Mammary epithelial cell (primary cell): ENCODE measurements at regions of chr11 and their contacts with region 1.

Region 1: GRCh38 chr11:58354727-58355126 is 4.1 kb downstream of the OR5B17 start:
- DNase-seq: no peak
- H3K4me3 ChIP-seq: no peak overlapping the region
- H3K27ac ChIP-seq: no peak overlapping the region
- H3K4me1 ChIP-seq: no peaks in the 10 kb centered on the region
- H3K27me3 ChIP-seq: no peaks in the 10 kb centered on the region
- CTCF ChIP-seq: no peak

Region 2: DNA sequence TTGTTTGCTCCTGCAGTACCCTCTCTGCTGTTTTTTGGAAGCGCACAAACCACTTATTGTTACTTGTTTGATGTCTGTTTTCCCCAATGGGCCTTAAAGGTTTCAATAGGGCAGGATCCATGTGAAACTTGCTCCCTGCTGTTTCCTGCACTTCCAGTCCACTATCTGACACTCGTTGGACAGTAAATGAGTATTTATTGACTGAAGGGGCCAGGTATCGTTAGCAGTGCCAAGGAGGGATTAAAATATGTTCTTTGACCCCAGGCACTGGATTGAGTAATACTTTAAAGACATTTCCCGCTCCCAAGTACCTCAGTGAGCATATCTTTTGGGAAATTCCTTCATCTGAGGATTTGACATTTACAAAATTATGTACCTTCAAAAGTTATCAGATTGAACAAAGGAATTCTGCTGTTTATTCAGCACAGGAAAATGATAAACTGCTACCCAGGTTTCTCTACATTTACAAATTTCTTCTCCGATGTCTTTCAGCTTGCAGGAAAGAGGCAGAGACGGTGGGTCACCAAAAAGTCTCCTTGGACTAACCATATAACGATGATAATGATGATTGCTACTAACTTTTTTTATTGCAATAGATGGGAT is 189.1 kb before region 1 on chr11:
- CTCF ChIA-PET with region 1: no interaction called
- dilution Hi-C with region 1: no loop called
- in situ Hi-C with region 1: no loop called
- intact Hi-C with region 1: no loop called
- DNase-seq: no peak
- H3K4me3 ChIP-seq: no peak overlapping the region
- H3K27ac ChIP-seq: no peak overlapping the region
- H3K4me1 ChIP-seq: no peaks in the 10 kb centered on the region
- H3K27me3 ChIP-seq: no peaks in the 10 kb centered on the region
- CTCF ChIP-seq: no peak

Region 3: DNA sequence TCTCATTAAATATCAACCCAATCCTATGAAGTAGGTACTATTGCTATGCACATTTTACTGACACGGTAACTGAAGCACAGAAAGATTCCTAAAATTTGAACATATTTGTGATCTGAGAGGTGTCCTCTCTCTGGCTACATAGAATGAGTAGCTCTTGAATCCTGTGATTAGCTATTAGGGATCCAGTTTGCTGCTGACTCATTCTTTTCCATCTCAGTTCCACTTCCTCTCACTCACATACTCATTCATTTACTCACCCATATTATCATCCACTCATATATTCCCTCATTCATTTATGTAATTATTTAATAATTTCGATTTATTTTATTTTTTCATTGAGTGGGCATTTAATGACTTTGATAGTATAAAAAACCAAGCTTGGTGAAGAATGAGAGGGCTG is 38.6 kb before region 1 on chr11:
- CTCF ChIA-PET with region 1: no interaction called
- dilution Hi-C with region 1: loop called (anchors 5 kb)
- in situ Hi-C with region 1: no loop called
- intact Hi-C with region 1: no loop called
- DNase-seq: peak; percentile 60
- H3K4me3 ChIP-seq: no peak overlapping the region
- H3K27ac ChIP-seq: peak overlapping the region; percentile 7
- H3K4me1 ChIP-seq: peaks cover 6% of the 10 kb centered on the region
- H3K27me3 ChIP-seq: no peaks in the 10 kb centered on the region
- CTCF ChIP-seq: no peak

Region 4: DNA sequence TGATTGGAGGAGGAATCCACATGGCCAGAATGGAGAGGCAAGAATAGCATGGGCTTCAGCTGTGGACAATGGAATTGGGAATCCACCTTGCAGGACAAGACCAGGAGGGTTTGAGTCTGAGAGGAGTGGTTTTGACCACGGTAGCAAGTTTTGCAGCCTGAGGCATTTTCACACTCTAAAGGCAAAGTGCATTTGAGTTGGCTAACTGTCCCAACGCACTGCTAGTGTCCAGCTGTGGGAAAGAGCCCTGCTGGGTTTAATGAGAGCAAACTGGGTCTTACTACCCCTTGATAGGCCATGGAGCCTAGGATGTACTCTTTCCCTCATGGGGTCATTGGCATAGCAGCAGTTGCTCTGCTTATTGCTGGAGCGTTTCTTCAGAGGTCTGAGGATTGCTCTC is 73.3 kb after region 1 on chr11 and contains the start of gene OR5B2:
- CTCF ChIA-PET with region 1: no interaction called
- dilution Hi-C with region 1: no loop called
- in situ Hi-C with region 1: no loop called
- intact Hi-C with region 1: no loop called
- DNase-seq: no peak
- H3K4me3 ChIP-seq: no peak within 1 kb of the TSS
- H3K27ac ChIP-seq: no peak within 1 kb of the TSS
- H3K4me1 ChIP-seq: no peaks in the 10 kb centered on the region
- H3K27me3 ChIP-seq: no peaks in the 10 kb centered on the region
- CTCF ChIP-seq: no peak
- total RNA-seq, gene OR5B2: under 0.01 TPM in 1 of 2 donors, not detected in the other

Region 5: DNA sequence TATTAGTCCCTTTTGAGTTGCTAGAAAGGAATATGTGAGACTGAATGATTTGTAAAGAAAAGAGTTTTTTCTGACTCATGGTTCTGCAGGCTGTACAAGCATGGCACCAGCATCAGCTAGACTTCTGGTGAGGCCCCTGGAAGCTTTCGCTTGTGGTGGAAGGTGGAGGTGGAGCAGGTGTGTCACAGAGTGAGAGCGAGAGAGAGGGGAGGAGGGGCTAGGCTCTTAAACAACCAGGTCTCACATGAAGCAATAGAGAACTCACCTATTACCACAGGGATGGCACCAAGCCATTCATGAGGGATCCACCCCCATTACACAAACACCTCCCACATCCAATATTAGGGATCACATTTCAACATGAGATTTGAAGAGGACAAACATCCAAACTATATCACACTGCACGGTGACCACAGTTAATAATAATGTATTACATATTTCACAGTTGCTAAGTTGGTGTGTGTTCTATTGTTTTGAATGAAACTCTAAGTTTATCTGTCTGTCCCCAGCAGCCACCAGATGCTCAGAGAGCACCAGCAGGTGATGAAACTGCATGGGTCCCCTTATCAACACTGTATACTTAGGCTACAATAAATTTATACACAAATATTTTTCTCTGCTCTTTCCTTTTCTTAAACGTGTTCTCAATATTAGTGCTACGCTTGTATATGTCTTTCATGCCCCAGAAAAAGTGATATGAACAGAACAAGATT is 238.2 kb after region 1 on chr11:
- CTCF ChIA-PET with region 1: no interaction called
- dilution Hi-C with region 1: no loop called
- in situ Hi-C with region 1: no loop called
- intact Hi-C with region 1: no loop called
- DNase-seq: peak; percentile 40
- H3K4me3 ChIP-seq: no peak overlapping the region
- H3K27ac ChIP-seq: no peak overlapping the region
- H3K4me1 ChIP-seq: no peaks in the 10 kb centered on the region
- H3K27me3 ChIP-seq: no peaks in the 10 kb centered on the region
- CTCF ChIP-seq: no peak

Region 6: GRCh38 chr11:59025097-59025496 is 670.4 kb after region 1 on chr11:
- CTCF ChIA-PET with region 1: no interaction called
- dilution Hi-C with region 1: no loop called
- in situ Hi-C with region 1: no loop called
- intact Hi-C with region 1: no loop called
- DNase-seq: no peak
- H3K4me3 ChIP-seq: no peak overlapping the region
- H3K27ac ChIP-seq: no peak overlapping the region
- H3K4me1 ChIP-seq: no peaks in the 10 kb centered on the region
- H3K27me3 ChIP-seq: no peaks in the 10 kb centered on the region
- CTCF ChIP-seq: no peak